ENCODE measurements at regions of chr7 and their contacts with region 1.

Region 1: GRCh38 chr7:66150471-66150870 is 35.8 kb downstream of the CRCP start:
- DNase-seq: peak; percentile 67 to 79 (median 77)
- ATAC-seq: peak; percentile 45 to 85 (median 76)
- H3K4me3 ChIP-seq: no peak overlapping the region
- H3K27ac ChIP-seq: peak overlapping the region; percentile 61 to 85 (median 74)
- H3K4me1 ChIP-seq: peaks cover 5 to 60% (median 32%) of the 10 kb centered on the region in 12 donors
- H3K27me3 ChIP-seq: no peaks in the 10 kb centered on the region
- CTCF ChIP-seq: no peak
- POLR2A ChIP-seq: no peak

Region 2: GRCh38 chr7:66110861-66111260 is 39.6 kb before region 1 on chr7:
- intact Hi-C with region 1: no loop called
- DNase-seq: no peak
- ATAC-seq: no peak
- H3K4me3 ChIP-seq: no peak overlapping the region
- H3K27ac ChIP-seq: no peak overlapping the region
- H3K4me1 ChIP-seq: peaks cover 0 to 13% (median 7%) of the 10 kb centered on the region in 12 donors
- H3K27me3 ChIP-seq: no peaks in the 10 kb centered on the region
- CTCF ChIP-seq: no peak
- POLR2A ChIP-seq: no peak

Region 3: DNA sequence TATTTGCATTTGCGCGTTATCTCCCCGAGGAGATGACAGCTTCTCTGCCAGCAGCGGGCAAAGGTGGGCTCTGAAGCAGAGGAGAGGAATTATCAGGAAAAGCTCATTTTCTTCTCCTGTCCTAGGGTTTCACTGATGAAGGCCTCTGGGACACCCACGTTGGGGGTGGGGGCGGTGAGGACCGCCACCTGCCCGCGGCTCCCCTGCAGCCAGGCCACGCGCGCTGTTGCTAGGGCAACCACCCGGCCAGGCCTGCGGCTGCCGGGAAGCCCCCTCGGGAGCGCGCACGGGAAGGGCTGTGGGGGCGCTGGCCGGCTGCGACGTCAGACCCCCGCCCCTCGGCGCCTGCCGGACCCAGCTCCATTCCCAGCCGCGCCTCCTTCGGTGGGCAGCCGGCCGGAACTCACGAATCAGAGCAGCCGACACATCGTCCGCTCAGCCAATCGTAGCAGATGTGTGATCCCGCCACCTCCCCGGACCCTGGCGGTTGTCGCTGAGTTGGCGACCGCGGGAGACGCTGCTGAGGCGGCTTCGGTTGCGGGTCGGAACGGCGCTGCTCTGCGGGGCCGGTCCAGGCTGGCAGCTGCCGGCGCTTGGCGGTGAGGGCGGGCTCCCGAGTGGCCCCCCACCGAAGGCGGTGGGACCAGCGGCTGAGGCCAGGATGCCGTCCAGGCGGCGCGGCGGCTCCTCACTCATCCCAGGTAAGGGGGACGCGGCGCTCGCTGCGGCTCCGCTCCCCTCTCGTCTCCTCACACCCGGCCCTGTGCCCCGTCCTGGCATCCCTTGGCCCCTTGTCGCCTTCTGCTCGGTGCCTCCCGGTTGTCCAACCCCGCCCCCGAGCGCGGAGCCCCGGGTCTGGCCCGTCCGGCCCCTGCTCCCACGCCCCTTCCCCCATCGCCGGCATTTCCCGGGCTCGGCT is 54.6 kb after region 1 on chr7 and contains the start of gene TPST1:
- intact Hi-C with region 1: loop called in 4 of 10 experiments (anchors 5 to 10 kb)
- DNase-seq: peak; percentile 88 to 93 (median 89)
- ATAC-seq: peak; percentile 92 to 97 (median 97)
- H3K4me3 ChIP-seq: peak within 1 kb of the TSS; percentile 67 to 99 (median 96)
- H3K27ac ChIP-seq: peak within 1 kb of the TSS in 11 of 12 donors; percentile 40 to 84 (median 70)
- H3K4me1 ChIP-seq: peaks cover 0 to 29% (median 12%) of the 10 kb centered on the region in 12 donors
- H3K27me3 ChIP-seq: no peaks in the 10 kb centered on the region
- CTCF ChIP-seq: peak; percentile 29 to 82 (median 50)
- POLR2A ChIP-seq: peak in 1 of 2 donors; percentile 91
- total RNA-seq, gene TPST1: 3.6 to 10.8 (median 5.5) TPM